ENCODE measurements at regions of chr7 and their contacts with region 1.

Region 1: GRCh38 chr7:40329601-40330153 is 194.9 kb downstream of the SUGCT start:
- DNase-seq: no peak
- ATAC-seq: peak; percentile 31
- H3K4me3 Mint-ChIP-seq: no peak overlapping the region
- H3K27ac Mint-ChIP-seq: no peak overlapping the region
- H3K4me1 Mint-ChIP-seq: no peaks in the 10 kb centered on the region
- H3K27me3 Mint-ChIP-seq: no peaks in the 10 kb centered on the region
- CTCF ChIP-seq: no peak

Region 2: GRCh38 chr7:40551685-40552576 is 222.3 kb after region 1 on chr7:
- CTCF ChIA-PET with region 1: no interaction called
- POLR2A ChIA-PET with region 1: no interaction called
- intact Hi-C with region 1: no loop called
- DNase-seq: no peak
- ATAC-seq: no peak
- H3K4me3 Mint-ChIP-seq: no peak overlapping the region
- H3K27ac Mint-ChIP-seq: no peak overlapping the region
- H3K4me1 Mint-ChIP-seq: no peaks in the 10 kb centered on the region
- H3K27me3 Mint-ChIP-seq: no peaks in the 10 kb centered on the region
- CTCF ChIP-seq: no peak

Region 3: GRCh38 chr7:40604601-40605438 is 275.1 kb after region 1 on chr7:
- CTCF ChIA-PET with region 1: no interaction called
- POLR2A ChIA-PET with region 1: no interaction called
- intact Hi-C with region 1: loop called (anchors 10 kb)
- DNase-seq: no peak
- ATAC-seq: no peak
- H3K4me3 Mint-ChIP-seq: no peak overlapping the region
- H3K27ac Mint-ChIP-seq: no peak overlapping the region
- H3K4me1 Mint-ChIP-seq: no peaks in the 10 kb centered on the region
- H3K27me3 Mint-ChIP-seq: peaks cover 3% of the 10 kb centered on the region
- CTCF ChIP-seq: no peak

Region 4: DNA sequence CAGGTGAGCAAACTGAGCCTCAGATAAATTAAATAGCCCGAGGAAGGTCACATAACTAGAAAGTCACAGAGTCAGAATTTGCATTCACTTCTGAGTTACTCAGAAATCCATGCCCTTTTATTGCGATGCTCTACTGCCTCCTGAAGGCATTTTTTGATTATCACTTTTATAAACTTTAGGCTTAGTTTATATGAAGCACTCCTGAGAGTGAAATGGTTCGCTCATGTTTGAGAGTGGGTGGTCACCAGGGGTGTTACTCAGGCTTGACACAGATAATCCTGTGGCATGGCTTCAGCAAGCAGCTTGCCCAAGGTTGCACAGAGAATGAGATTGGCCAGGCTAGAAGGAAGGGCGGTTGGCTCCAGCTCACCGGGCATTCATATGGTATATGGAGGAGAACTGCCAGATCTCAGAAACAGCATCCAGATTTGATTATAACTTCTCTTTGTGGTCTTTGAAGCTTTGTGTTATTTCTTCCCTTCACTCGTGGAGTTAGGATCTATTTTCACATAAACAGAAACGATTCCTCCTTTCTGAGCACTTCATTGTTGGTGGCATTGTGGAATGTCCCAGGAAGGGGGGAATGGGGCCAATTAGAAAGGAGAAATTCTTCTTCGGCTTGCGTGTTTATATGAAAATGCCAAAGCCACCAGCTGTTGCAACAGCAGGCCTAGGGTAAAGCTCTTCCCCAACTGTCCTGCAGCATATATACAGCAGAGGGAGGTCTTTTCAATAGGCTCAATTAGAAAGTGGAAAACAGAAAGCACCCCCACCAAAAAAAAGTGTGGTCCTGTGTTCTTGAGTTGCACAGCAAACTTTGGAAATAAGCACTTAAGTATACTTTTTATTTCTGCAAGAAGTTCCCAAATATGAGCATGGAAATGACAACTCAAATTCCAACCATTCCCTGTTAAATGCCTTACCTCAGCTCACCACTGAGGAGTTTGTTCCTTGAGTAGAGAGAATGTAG is 433.9 kb after region 1 on chr7:
- CTCF ChIA-PET with region 1: no interaction called
- POLR2A ChIA-PET with region 1: no interaction called
- intact Hi-C with region 1: no loop called
- DNase-seq: no peak
- ATAC-seq: no peak
- H3K4me3 Mint-ChIP-seq: no peak overlapping the region
- H3K27ac Mint-ChIP-seq: no peak overlapping the region
- H3K4me1 Mint-ChIP-seq: no peaks in the 10 kb centered on the region
- H3K27me3 Mint-ChIP-seq: no peaks in the 10 kb centered on the region
- CTCF ChIP-seq: no peak

Region 5: GRCh38 chr7:41731492-41732435 is 1402.1 kb after region 1 on chr7:
- CTCF ChIA-PET with region 1: no interaction called
- POLR2A ChIA-PET with region 1: no interaction called
- intact Hi-C with region 1: loop called (anchors 1 kb)
- DNase-seq: no peak
- ATAC-seq: peak; percentile 25
- H3K4me3 Mint-ChIP-seq: peak overlapping the region; percentile 17
- H3K27ac Mint-ChIP-seq: no peak overlapping the region
- H3K4me1 Mint-ChIP-seq: peaks cover 15% of the 10 kb centered on the region
- H3K27me3 Mint-ChIP-seq: no peaks in the 10 kb centered on the region
- CTCF ChIP-seq: no peak

Measured in activated B cell treated with CpG ODN at 0.5 μM for 24 hours (primary cell).